Mammary epithelial cell (primary cell): ENCODE measurements at regions of chr22 and their contacts with region 1.

Region 1: GRCh38 chr22:23088199-23088604 is 17.9 kb downstream of the GNAZ start:
- DNase-seq: no peak
- H3K4me3 ChIP-seq: no peak overlapping the region
- H3K27ac ChIP-seq: no peak overlapping the region
- H3K4me1 ChIP-seq: no peaks in the 10 kb centered on the region
- H3K27me3 ChIP-seq: no peaks in the 10 kb centered on the region
- CTCF ChIP-seq: no peak

Region 2: GRCh38 chr22:22666307-22667091 is 421.7 kb before region 1 on chr22:
- CTCF ChIA-PET with region 1: no interaction called
- dilution Hi-C with region 1: no loop called
- in situ Hi-C with region 1: no loop called
- intact Hi-C with region 1: no loop called
- DNase-seq: no peak
- H3K4me3 ChIP-seq: no peak overlapping the region
- H3K27ac ChIP-seq: no peak overlapping the region
- H3K4me1 ChIP-seq: no peaks in the 10 kb centered on the region
- H3K27me3 ChIP-seq: no peaks in the 10 kb centered on the region
- CTCF ChIP-seq: peak; percentile 5 to 57

Region 3: DNA sequence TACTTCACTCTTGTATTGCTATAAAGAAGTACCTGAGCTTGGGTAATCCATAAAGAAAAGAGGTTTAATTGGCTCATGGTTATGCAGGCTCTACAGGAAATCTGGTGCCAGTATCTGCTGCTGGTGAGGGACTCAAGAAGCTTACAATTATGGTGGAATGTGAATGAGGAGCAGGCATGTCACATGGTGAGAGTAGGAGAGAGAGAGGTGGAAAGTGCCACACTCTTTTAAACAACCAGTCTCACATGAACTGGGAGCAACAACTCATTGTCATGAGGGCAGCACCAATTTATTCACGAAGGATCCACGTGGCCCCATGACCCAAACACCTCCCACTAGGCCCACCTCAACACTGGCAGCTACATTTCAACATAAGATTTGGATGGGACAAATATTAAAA is 225.2 kb before region 1 on chr22:
- CTCF ChIA-PET with region 1: no interaction called
- dilution Hi-C with region 1: loop called (anchors 5 kb)
- in situ Hi-C with region 1: no loop called
- intact Hi-C with region 1: no loop called
- DNase-seq: no peak
- H3K4me3 ChIP-seq: no peak overlapping the region
- H3K27ac ChIP-seq: no peak overlapping the region
- H3K4me1 ChIP-seq: no peaks in the 10 kb centered on the region
- H3K27me3 ChIP-seq: no peaks in the 10 kb centered on the region
- CTCF ChIP-seq: no peak